Mammary epithelial cell (primary cell): ENCODE measurements at regions of chr12 and their contacts with region 1.

Region 1: GRCh38 chr12:6858799-6859198 is 6.8 kb downstream of the USP5 start:
- DNase-seq: no peak
- H3K4me3 ChIP-seq: no peak overlapping the region
- H3K27ac ChIP-seq: no peak overlapping the region
- H3K4me1 ChIP-seq: peaks cover 5% of the 10 kb centered on the region
- H3K27me3 ChIP-seq: no peaks in the 10 kb centered on the region
- CTCF ChIP-seq: no peak

Region 2: GRCh38 chr12:6735448-6736191 is 123.2 kb before region 1 on chr12:
- CTCF ChIA-PET with region 1: no interaction called
- dilution Hi-C with region 1: no loop called
- in situ Hi-C with region 1: no loop called
- intact Hi-C with region 1: no loop called
- DNase-seq: peak; percentile 97
- H3K4me3 ChIP-seq: no peak overlapping the region
- H3K27ac ChIP-seq: peak overlapping the region; percentile 7
- H3K4me1 ChIP-seq: peaks cover 13% of the 10 kb centered on the region
- H3K27me3 ChIP-seq: no peaks in the 10 kb centered on the region
- CTCF ChIP-seq: peak; percentile 76 to 81

Region 3: GRCh38 chr12:6937481-6938297 is 78.9 kb after region 1 on chr12:
- CTCF ChIA-PET with region 1: no interaction called
- dilution Hi-C with region 1: loop called (anchors 5 kb)
- in situ Hi-C with region 1: no loop called
- intact Hi-C with region 1: no loop called
- DNase-seq: peak; percentile 95
- H3K4me3 ChIP-seq: peak overlapping the region; percentile 33 to 59 (median 48)
- H3K27ac ChIP-seq: peak overlapping the region; percentile 14
- H3K4me1 ChIP-seq: peaks cover 31% of the 10 kb centered on the region
- H3K27me3 ChIP-seq: no peaks in the 10 kb centered on the region
- CTCF ChIP-seq: peak; percentile 74 to 96